RWPE1 (cell line): ENCODE measurements at regions of chr1 and their contacts with region 1.

Region 1: GRCh38 chr1:202135221-202135721 is 9.3 kb downstream of the ARL8A start:
- DNase-seq: peak; percentile 94
- H3K27ac ChIP-seq: peak overlapping the region; percentile 85
- CTCF ChIP-seq: peak; percentile 86

Region 2: DNA sequence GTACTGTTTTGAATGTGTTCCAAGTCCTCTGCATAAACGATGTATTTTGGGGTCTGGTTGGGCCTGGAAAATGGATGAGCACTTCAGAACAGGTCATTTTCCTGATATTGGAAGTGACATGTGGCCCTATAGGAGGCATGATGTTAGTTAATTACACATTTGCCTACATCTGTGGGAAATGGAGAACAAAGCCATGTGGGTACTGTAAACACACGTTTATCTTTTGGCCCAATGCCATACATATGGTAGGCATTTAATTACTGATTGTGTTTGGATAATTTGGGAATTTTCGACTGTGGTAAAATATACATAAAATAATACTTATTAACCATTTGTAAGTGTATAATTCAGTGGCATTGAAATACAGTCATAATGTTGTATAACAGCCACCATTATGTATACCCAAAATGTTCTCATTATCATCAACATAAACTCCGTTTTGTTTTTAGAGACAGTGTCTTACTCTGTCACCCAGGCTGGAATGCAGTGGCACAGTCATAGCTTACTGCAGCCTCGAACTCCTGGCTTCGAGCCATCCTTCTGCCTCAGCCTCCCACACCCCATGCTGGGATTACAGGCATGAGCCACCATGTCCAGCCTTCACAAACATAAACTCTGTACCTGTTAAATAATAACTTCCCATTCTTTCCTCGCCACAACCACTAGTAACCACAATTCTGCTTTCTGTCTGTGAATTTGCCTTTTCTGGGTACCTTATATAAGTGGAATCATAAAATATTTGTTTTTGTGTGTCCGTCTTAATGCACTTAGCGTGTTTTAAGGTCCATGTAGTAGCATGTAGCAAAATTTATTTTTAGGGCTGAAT is 164.7 kb before region 1 on chr1:
- CTCF ChIA-PET with region 1: interaction called, 10 read pairs
- POLR2A ChIA-PET with region 1: no interaction called
- DNase-seq: no peak
- H3K27ac ChIP-seq: no peak overlapping the region
- CTCF ChIP-seq: no peak

Region 3: DNA sequence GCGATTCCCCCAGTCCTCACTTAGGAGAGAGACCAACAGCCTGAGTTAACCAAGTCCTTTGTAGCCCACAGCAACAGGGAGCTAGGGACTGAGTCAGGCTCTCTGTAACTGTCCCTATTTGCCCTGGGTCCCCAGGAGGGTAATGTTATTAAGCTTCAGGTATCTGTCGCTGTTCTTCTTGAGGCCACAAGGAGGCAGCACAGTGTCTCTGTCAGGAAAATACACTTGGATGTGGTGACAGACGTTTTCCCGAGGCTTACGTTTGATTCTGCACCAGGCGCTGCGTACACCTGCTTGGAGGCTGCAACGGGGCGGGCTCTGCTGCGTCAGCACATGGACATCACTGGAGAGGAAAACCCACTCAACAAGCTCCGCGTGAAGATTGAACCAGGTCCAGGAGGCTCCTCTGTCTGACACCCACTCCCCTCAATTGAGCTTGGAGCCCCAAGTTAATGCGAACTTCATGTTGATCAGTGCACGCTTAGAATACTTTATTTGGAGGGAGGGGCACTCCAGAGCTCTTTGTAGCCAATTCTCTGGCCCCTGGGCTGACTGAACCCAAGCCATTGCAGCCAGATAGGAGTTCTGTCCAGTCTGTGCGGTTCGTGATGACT is 135.5 kb before region 1 on chr1:
- CTCF ChIA-PET with region 1: interaction called, 34 read pairs
- POLR2A ChIA-PET with region 1: no interaction called
- DNase-seq: peak; percentile 78
- H3K27ac ChIP-seq: no peak overlapping the region
- CTCF ChIP-seq: peak; percentile 63

Region 4: DNA sequence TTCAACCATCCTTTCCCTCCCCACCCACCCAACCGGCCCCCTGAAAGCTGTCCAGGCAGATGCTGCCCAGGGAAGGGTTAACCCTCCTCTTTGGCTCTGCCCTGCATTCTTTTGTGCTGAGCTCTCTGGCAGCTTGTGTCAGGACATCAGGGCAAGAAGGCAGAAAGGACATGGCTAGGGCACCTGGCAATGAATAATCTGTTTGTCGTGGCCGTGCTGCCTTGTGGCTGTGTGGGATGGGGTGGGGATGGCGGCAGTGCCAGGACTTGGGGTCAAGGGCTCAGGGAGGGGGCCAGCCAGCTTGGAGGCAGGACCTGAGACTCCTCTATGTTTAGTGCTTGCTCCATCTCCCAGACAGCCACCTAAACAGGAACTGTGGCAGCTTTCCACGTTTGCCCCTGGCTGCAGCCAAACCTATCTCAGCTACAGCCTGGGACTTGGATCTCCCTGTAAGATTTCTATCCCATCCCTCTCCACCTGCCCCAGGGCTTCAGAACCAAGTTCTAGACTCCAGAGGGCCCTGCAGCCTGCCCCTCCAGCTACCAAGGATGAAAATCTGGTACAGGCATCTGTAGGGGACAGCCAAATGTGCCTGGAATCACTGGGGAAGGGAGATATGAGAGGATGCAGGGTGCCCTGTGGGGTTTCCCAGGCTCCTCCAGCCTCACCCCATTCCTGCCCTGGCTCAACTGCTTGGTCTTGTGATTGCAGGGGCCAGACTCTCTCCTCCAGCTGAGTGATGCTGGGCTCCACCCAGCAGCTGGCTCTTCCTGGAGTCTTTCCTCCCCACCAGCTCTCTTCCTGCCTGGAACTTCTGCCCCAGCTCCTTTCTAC is 22.2 kb before region 1 on chr1:
- CTCF ChIA-PET with region 1: interaction called, 29 read pairs
- POLR2A ChIA-PET with region 1: no interaction called
- DNase-seq: no peak
- H3K27ac ChIP-seq: peak overlapping the region; percentile 72
- CTCF ChIP-seq: no peak

Region 5: GRCh38 chr1:202122639-202123335 is 12.5 kb before region 1 on chr1 and contains the start of gene GPR37L1:
- CTCF ChIA-PET with region 1: interaction called, 29 read pairs
- POLR2A ChIA-PET with region 1: no interaction called
- DNase-seq: no peak
- H3K27ac ChIP-seq: no peak within 1 kb of the TSS
- CTCF ChIP-seq: no peak

Region 6: DNA sequence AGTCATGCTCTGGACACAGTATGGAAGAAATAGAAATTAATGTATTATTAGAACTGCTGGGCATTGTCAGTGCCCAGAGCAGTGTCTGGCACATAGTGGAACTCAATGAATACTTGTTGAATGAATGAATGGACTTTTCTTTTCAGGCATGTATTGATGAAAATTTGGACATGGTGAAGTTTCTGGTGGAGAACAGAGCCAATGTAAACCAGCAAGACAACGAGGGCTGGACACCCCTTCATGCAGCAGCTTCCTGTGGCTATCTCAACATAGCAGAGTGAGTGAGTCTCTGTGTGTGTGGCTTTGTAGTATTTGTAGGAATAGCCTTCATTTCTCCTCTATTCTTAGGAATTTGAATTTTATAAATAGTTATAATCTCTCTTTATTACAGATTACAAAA is 281.4 kb after region 1 on chr1:
- CTCF ChIA-PET with region 1: no interaction called
- POLR2A ChIA-PET with region 1: no interaction called
- DNase-seq: no peak
- H3K27ac ChIP-seq: no peak overlapping the region
- CTCF ChIP-seq: no peak